BJ (cell line): ENCODE measurements at regions of chr6 and their contacts with region 1.

Region 1: GRCh38 chr6:78810146-78810545 is 57.2 kb upstream of the IRAK1BP1 start:
- DNase-seq: peak; percentile 3
- H3K4me3 ChIP-seq: no peak overlapping the region
- H3K27me3 ChIP-seq: no peaks in the 10 kb centered on the region
- CTCF ChIP-seq: peak; percentile 69

Region 2: DNA sequence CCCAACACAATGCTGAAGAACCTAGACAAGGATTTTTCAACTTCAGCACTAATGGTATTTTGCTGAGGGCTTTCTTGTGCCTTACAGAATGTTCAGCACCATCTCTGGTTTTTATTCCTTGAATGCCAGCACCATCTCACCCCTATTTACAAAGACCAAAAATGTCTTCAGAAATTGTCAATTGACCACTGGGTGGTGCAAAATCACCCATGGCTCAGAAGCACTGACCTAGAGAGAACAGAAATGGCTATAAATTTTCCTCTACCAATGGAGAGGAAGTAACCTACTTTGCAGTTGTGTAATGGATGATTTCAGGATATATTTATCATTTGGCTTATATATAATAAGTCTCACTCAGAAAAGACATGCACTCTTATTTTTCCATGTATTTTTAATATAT is 373.8 kb before region 1 on chr6:
- CTCF ChIA-PET with region 1: interaction called, 11 read pairs
- POLR2A ChIA-PET with region 1: no interaction called
- DNase-seq: no peak
- H3K4me3 ChIP-seq: no peak overlapping the region
- H3K27me3 ChIP-seq: no peaks in the 10 kb centered on the region
- CTCF ChIP-seq: peak; percentile 52

Region 3: GRCh38 chr6:78570044-78570443 is 240.1 kb before region 1 on chr6:
- CTCF ChIA-PET with region 1: no interaction called
- POLR2A ChIA-PET with region 1: no interaction called
- DNase-seq: no peak
- H3K4me3 ChIP-seq: no peak overlapping the region
- H3K27me3 ChIP-seq: no peaks in the 10 kb centered on the region
- CTCF ChIP-seq: no peak

Region 4: GRCh38 chr6:78824045-78824444 is 13.9 kb after region 1 on chr6:
- CTCF ChIA-PET with region 1: interaction called, 13 read pairs
- POLR2A ChIA-PET with region 1: no interaction called
- DNase-seq: no peak
- H3K4me3 ChIP-seq: no peak overlapping the region
- H3K27me3 ChIP-seq: no peaks in the 10 kb centered on the region
- CTCF ChIP-seq: no peak

Region 5: DNA sequence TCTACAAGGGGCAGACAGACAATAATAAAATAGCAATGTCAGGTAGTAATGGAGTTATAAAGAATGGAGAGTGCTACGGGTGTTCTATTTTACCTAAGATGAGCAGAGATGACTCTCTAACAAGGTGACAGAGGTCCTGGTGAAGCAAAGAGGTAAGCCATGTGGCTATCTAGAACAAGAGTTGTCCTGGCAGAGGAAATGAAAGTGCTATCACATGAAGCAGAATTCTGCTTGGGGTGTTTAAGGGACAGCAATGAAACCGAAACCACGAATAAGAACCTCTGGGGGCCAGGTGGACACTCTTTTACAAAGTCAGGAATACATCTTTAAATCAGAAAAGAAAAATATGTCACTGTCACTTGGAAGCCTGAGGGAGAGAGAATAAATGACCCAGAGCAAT is 19.3 kb after region 1 on chr6:
- CTCF ChIA-PET with region 1: interaction called, 13 read pairs
- POLR2A ChIA-PET with region 1: no interaction called
- DNase-seq: no peak
- H3K4me3 ChIP-seq: no peak overlapping the region
- H3K27me3 ChIP-seq: no peaks in the 10 kb centered on the region
- CTCF ChIP-seq: no peak